Caco-2 (cell line): ENCODE measurements at regions of chr5 and their contacts with region 1.

Region 1: DNA sequence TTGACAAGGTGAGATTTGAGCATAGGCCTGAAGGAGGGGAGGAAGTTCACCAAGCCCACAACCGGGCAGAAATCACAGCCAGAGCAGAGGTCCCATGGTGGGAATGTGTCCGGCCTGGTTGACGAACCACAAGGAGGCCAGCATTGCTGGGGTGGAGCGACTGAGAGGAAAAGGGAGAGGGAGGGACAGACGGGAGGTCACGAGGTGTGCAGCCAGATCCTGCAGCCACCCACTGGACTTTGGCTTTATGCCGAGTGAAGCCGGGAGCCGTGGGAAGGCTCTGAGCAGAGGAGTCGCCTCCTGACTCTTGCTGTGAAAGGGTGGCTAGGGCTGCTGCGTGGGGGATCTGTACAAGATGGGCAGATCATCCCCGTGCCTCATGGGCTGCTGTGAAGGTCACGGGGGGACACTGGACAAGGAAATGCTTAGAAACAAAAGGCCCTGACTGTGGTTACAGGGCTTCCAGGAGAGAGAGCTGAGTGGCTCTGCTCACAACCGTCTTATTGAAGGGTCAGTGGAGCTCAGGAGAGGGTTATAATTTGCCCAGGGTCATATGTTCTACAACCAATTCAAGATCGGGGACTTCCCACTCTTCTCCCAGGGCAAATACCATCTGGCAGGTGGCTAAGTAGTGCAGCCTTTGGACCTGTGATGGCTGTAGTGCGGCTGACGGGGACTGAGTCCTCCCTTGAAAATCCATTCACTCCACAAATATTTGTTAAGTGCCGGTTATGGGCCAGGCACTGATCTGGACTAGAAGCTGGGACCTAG is 15.6 kb upstream of the CD74 start:
- DNase-seq: peak; percentile 66 to 85
- H3K4me3 ChIP-seq: no peak overlapping the region
- H3K4me3 Mint-ChIP-seq: peak overlapping the region; percentile 19
- H3K27ac Mint-ChIP-seq: peak overlapping the region; percentile 72
- H3K4me1 ChIP-seq: peaks cover 16% of the 10 kb centered on the region
- H3K4me1 Mint-ChIP-seq: peaks cover 22% of the 10 kb centered on the region
- H3K27me3 ChIP-seq: no peaks in the 10 kb centered on the region
- H3K27me3 Mint-ChIP-seq: no peaks in the 10 kb centered on the region
- CTCF ChIP-seq: no peak

Region 2: GRCh38 chr5:150412319-150413175 is 15.7 kb before region 1 on chr5 and contains the start of gene CD74:
- CTCF ChIA-PET with region 1: no interaction called
- POLR2A ChIA-PET with region 1: interaction called, 7 read pairs
- intact Hi-C with region 1: loop called (anchors 2 kb)
- DNase-seq: peak; percentile 73 to 86
- H3K4me3 ChIP-seq: peak within 1 kb of the TSS; percentile 9
- H3K4me3 Mint-ChIP-seq: peak within 1 kb of the TSS; percentile 72
- H3K27ac Mint-ChIP-seq: peak within 1 kb of the TSS; percentile 76
- H3K4me1 ChIP-seq: peaks cover 6% of the 10 kb centered on the region
- H3K4me1 Mint-ChIP-seq: peaks cover 7% of the 10 kb centered on the region
- H3K27me3 ChIP-seq: no peaks in the 10 kb centered on the region
- H3K27me3 Mint-ChIP-seq: no peaks in the 10 kb centered on the region
- CTCF ChIP-seq: no peak
- total RNA-seq, gene CD74: 49.6 and 59.3 TPM in 2 replicates

Region 3: GRCh38 chr5:150443242-150444075 is 15.2 kb after region 1 on chr5:
- CTCF ChIA-PET with region 1: interaction called, 5 read pairs
- POLR2A ChIA-PET with region 1: no interaction called
- intact Hi-C with region 1: loop called (anchors 1 kb)
- DNase-seq: no peak
- H3K4me3 ChIP-seq: no peak overlapping the region
- H3K4me3 Mint-ChIP-seq: no peak overlapping the region
- H3K27ac Mint-ChIP-seq: peak overlapping the region; percentile 32
- H3K4me1 ChIP-seq: 0 out of 2 replicates have a peak, but pooled peaks cover 4% of the 10 kb centered on the region
- H3K4me1 Mint-ChIP-seq: peaks cover 8% of the 10 kb centered on the region
- H3K27me3 ChIP-seq: no peaks in the 10 kb centered on the region
- H3K27me3 Mint-ChIP-seq: no peaks in the 10 kb centered on the region
- CTCF ChIP-seq: no peak